Endothelial cell of umbilical vein (primary cell): ENCODE measurements at regions of chr20 and their contacts with region 1.

Region 1: DNA sequence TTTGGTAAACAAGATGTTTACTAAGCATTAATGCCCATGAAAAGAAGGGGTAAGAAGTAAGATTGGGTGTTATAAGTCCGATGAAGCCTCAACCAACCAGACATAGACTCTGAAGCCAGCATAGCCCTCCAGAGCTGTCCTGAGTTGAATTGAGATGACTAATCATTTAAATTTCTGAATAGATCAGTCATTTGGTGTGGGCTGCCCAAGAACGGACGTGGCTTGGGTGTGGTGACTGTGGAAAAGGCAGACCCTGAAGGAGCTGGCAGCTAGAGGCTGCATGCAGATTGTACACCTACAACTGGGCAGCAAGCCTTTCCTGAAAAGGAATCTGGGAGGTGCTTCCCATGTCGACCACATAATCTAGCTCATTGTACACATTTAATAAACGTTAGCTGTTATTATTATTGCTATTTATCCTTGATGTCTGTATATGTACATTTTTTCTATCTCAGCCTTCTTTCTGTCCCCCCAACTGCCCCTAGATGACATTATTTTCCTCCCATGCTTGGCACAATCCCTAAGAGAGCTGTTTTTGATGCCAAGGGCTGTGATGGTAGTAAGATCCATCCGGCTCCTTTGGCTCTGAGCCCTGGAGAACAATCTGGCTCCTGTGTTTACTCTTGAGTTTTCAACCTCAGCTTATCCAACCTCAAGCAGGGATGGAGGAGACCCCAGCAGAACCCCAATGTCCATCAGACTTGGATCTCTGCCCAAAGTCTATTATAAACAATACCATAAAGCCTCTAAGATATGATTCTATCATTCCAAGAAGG is 57.6 kb upstream of the JAG1 start:
- DNase-seq: peak; percentile 25
- H3K4me3 ChIP-seq: no peak overlapping the region
- H3K27ac ChIP-seq: peak overlapping the region; percentile 8
- H3K4me1 ChIP-seq: peaks cover 15% of the 10 kb centered on the region
- H3K27me3 ChIP-seq: no peaks in the 10 kb centered on the region
- CTCF ChIP-seq: no peak
- POLR2A ChIP-seq: no peak

Region 2: GRCh38 chr20:10297684-10298240 is 433.6 kb before region 1 on chr20:
- CTCF ChIA-PET with region 1: no interaction called
- POLR2A ChIA-PET with region 1: no interaction called
- dilution Hi-C with region 1: no loop called
- intact Hi-C with region 1: no loop called
- DNase-seq: peak; percentile 60
- H3K4me3 ChIP-seq: no peak overlapping the region
- H3K27ac ChIP-seq: no peak overlapping the region
- H3K4me1 ChIP-seq: peaks cover 8% of the 10 kb centered on the region
- H3K27me3 ChIP-seq: no peaks in the 10 kb centered on the region
- CTCF ChIP-seq: no peak
- POLR2A ChIP-seq: no peak

Region 3: DNA sequence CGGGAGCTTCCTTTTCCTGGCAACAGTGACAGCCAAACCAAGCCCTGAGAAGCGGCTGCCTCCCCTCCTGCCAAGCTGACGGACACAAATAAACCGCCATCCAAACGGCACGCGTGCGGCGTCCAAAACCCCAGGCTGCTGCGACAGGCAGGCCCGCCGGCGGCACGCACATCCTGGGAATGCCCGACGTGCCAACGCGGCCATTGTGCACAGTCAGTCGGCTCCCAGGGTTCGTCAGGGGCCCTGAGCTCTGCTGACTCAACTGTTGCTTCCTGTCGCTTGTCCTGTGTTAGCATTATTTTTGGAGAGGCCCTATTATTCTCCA is 64.3 kb before region 1 on chr20:
- CTCF ChIA-PET with region 1: no interaction called
- POLR2A ChIA-PET with region 1: no interaction called
- dilution Hi-C with region 1: no loop called
- intact Hi-C with region 1: no loop called
- DNase-seq: peak; percentile 89
- H3K4me3 ChIP-seq: no peak overlapping the region
- H3K27ac ChIP-seq: peak overlapping the region; percentile 94
- H3K4me1 ChIP-seq: peaks cover 67% of the 10 kb centered on the region
- H3K27me3 ChIP-seq: no peaks in the 10 kb centered on the region
- CTCF ChIP-seq: no peak
- POLR2A ChIP-seq: no peak

Region 4: DNA sequence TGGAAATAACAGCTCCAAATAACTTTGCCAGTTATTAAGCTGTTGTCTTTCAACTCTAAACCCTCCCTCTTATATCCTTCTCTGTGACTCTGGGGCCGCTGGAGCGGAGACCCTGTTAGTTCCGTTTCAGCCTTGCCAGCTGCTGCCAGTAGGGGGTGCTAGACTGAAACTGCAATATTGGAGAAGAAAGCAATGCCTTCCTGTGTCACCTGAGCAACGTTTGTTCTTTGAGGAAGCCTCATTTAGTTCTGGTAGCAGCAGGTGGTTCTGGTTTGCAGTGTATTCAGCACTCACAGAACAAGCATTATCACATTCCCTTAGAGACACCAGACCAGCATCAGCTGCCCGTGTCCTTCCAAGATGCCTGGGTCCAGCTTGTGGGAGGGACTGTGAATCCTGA is 34.7 kb before region 1 on chr20:
- CTCF ChIA-PET with region 1: no interaction called
- POLR2A ChIA-PET with region 1: no interaction called
- dilution Hi-C with region 1: no loop called
- intact Hi-C with region 1: loop called (anchors 5 kb)
- DNase-seq: no peak
- H3K4me3 ChIP-seq: no peak overlapping the region
- H3K27ac ChIP-seq: no peak overlapping the region
- H3K4me1 ChIP-seq: no peaks in the 10 kb centered on the region
- H3K27me3 ChIP-seq: no peaks in the 10 kb centered on the region
- CTCF ChIP-seq: peak; percentile 37 to 42
- POLR2A ChIP-seq: no peak

Region 5: GRCh38 chr20:10721137-10721896 is 10.1 kb before region 1 on chr20:
- CTCF ChIA-PET with region 1: interaction called, 3 read pairs
- POLR2A ChIA-PET with region 1: interaction called, 10 read pairs
- dilution Hi-C with region 1: no loop called
- intact Hi-C with region 1: no loop called
- DNase-seq: no peak
- H3K4me3 ChIP-seq: no peak overlapping the region
- H3K27ac ChIP-seq: no peak overlapping the region
- H3K4me1 ChIP-seq: peaks cover 11% of the 10 kb centered on the region
- H3K27me3 ChIP-seq: no peaks in the 10 kb centered on the region
- CTCF ChIP-seq: no peak
- POLR2A ChIP-seq: no peak